Natural killer cell (primary cell): ENCODE measurements at regions of chr19 and their contacts with region 1.

Region 1: GRCh38 chr19:4108767-4109625 is 14.9 kb downstream of the MAP2K2 start:
- DNase-seq: peak; percentile 83 to 91
- ATAC-seq: peak; percentile 52 to 79 (median 69)
- H3K4me3 ChIP-seq: no peak overlapping the region
- H3K4me3 Mint-ChIP-seq: peak overlapping the region; percentile 78
- H3K27ac ChIP-seq: peak overlapping the region; percentile 83
- H3K27ac Mint-ChIP-seq: peak overlapping the region; percentile 97 to 99
- H3K4me1 ChIP-seq: peaks cover 91% of the 10 kb centered on the region
- H3K4me1 Mint-ChIP-seq: peaks cover 63 to 70% of the 10 kb centered on the region in 2 donors
- H3K27me3 ChIP-seq: no peaks in the 10 kb centered on the region
- H3K27me3 Mint-ChIP-seq: no peaks in the 10 kb centered on the region
- CTCF ChIP-seq: no peak

Region 2: DNA sequence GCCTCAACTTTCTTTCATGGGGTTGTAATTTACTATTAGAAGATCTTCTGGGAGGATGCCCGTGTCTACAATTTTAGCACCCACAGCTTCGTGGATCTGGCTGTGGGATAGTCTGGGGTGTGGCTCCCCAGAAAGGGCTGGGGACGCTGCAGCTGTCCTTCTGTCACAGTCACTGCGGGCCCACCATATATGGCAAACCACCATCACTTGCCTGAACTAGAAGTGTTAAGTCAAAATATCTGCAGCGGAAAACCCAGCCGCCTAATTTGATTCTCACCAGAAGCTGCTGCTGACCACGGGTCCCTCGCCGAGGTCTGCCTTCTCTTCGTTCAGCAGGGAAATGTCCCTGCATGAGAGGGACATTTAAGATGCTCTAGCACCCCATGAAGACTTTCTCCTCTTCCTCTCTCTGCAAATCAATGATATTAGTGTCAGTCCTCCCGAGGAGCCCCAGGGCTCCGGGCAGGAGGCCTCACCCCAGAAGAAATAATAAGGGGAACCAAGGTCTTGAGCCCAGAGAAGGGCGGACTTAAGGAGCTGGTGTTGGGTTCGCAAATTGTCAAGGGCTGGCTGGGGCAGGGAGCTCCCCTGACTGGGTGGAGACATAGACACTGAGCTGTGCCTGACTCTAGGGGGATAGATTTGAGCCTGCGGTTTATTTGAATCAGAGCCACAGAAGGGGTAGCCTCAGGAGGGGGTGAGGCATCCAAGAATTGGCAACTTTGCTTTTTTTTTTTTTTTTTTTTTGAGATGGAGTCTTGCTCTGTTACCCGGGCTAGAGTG is 319.8 kb before region 1 on chr19:
- intact Hi-C with region 1: loop called (anchors 2 kb)
- DNase-seq: peak; percentile 70 to 77
- ATAC-seq: peak; percentile 67 to 82 (median 77)
- H3K4me3 ChIP-seq: peak overlapping the region; percentile 15
- H3K4me3 Mint-ChIP-seq: peak overlapping the region; percentile 88
- H3K27ac ChIP-seq: peak overlapping the region; percentile 84
- H3K27ac Mint-ChIP-seq: peak overlapping the region; percentile 92 to 96
- H3K4me1 ChIP-seq: peaks cover 80% of the 10 kb centered on the region
- H3K4me1 Mint-ChIP-seq: peaks cover 41 to 57% of the 10 kb centered on the region in 2 donors
- H3K27me3 ChIP-seq: no peaks in the 10 kb centered on the region
- H3K27me3 Mint-ChIP-seq: no peaks in the 10 kb centered on the region
- CTCF ChIP-seq: no peak

Region 3: DNA sequence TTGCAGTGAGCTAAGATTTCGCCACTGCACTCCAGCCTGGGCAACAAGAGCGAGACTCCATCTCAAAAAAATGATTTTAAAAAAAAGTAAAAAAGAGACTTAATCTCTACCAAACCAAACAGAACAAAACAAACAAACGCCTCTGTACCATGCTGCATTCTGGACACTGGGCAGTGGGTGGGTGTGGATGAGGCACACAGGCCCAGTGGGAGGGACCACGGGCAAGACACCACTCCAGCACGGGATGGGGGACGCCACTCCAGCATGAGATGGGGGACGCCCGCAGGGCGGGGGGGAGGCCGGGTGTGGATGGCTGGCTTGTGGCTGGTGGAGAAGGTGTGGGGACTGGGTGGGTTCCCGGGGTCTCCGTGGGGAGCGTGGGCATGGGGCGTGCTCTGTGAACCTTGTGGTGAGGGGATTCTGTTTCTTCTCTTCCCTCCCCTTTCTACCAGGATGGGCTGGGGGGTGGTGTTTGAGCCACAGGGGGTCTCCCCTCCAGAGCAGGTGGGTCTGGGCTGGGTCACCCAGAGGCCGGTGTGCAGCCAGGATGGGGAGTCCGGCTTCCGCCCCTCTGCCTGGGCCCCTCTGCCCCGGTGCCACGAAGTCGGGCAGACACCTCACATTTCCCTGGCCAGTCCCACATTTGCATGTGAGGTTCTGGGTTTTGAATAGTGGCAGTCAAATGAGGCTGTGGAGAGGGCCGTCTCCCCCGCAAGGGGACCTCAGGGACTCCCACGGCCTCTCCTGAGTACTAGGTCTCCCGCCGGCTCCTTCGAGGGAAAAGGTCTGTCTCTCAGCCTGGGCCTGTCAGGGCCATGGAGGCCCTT is 298.9 kb before region 1 on chr19:
- intact Hi-C with region 1: loop called (anchors 2 kb)
- DNase-seq: no peak
- ATAC-seq: no peak
- H3K4me3 ChIP-seq: no peak overlapping the region
- H3K4me3 Mint-ChIP-seq: no peak overlapping the region
- H3K27ac ChIP-seq: peak overlapping the region; percentile 62
- H3K27ac Mint-ChIP-seq: peak overlapping the region; percentile 65 to 99
- H3K4me1 ChIP-seq: peaks cover 100% of the 10 kb centered on the region
- H3K4me1 Mint-ChIP-seq: peaks cover 52 to 63% of the 10 kb centered on the region in 2 donors
- H3K27me3 ChIP-seq: no peaks in the 10 kb centered on the region
- H3K27me3 Mint-ChIP-seq: no peaks in the 10 kb centered on the region
- CTCF ChIP-seq: no peak

Region 4: GRCh38 chr19:4058034-4058692 is 50.8 kb before region 1 on chr19:
- intact Hi-C with region 1: loop called (anchors 2 kb)
- DNase-seq: peak; percentile 67 to 74
- ATAC-seq: peak; percentile 47 to 73 (median 51)
- H3K4me3 ChIP-seq: peak overlapping the region; percentile 30
- H3K4me3 Mint-ChIP-seq: peak overlapping the region; percentile 55
- H3K27ac ChIP-seq: peak overlapping the region; percentile 97
- H3K27ac Mint-ChIP-seq: peak overlapping the region; percentile 91 to 96
- H3K4me1 ChIP-seq: peaks cover 75% of the 10 kb centered on the region
- H3K4me1 Mint-ChIP-seq: peaks cover 10 to 58% of the 10 kb centered on the region in 2 donors
- H3K27me3 ChIP-seq: no peaks in the 10 kb centered on the region
- H3K27me3 Mint-ChIP-seq: no peaks in the 10 kb centered on the region
- CTCF ChIP-seq: no peak

Region 5: GRCh38 chr19:4065430-4066175 is 43.4 kb before region 1 on chr19:
- intact Hi-C with region 1: loop called (anchors 2 kb)
- DNase-seq: peak; percentile 98
- ATAC-seq: peak; percentile 76 to 92 (median 79)
- H3K4me3 ChIP-seq: peak overlapping the region; percentile 99
- H3K4me3 Mint-ChIP-seq: peak overlapping the region; percentile 74
- H3K27ac ChIP-seq: no peak overlapping the region
- H3K27ac Mint-ChIP-seq: peak overlapping the region in 1 of 2 donors; percentile 86
- H3K4me1 ChIP-seq: peaks cover 67% of the 10 kb centered on the region
- H3K4me1 Mint-ChIP-seq: peaks cover 24 to 35% of the 10 kb centered on the region in 2 donors
- H3K27me3 ChIP-seq: no peaks in the 10 kb centered on the region
- H3K27me3 Mint-ChIP-seq: no peaks in the 10 kb centered on the region
- CTCF ChIP-seq: no peak

Region 6: GRCh38 chr19:4077882-4078614 is 30.9 kb before region 1 on chr19:
- intact Hi-C with region 1: no loop called
- DNase-seq: peak in 1 of 2 donors; percentile 65
- ATAC-seq: peak; percentile 72 to 81 (median 80)
- H3K4me3 ChIP-seq: peak overlapping the region; percentile 55
- H3K4me3 Mint-ChIP-seq: peak overlapping the region; percentile 90
- H3K27ac ChIP-seq: peak overlapping the region; percentile 82
- H3K27ac Mint-ChIP-seq: peak overlapping the region; percentile 79 to 89
- H3K4me1 ChIP-seq: peaks cover 61% of the 10 kb centered on the region
- H3K4me1 Mint-ChIP-seq: peaks cover 0 to 27% of the 10 kb centered on the region in 2 donors
- H3K27me3 ChIP-seq: no peaks in the 10 kb centered on the region
- H3K27me3 Mint-ChIP-seq: no peaks in the 10 kb centered on the region
- CTCF ChIP-seq: no peak

Region 7: GRCh38 chr19:4089400-4089908 is 19.5 kb before region 1 on chr19:
- intact Hi-C with region 1: loop called (anchors 1 kb)
- DNase-seq: peak; percentile 67 to 75
- ATAC-seq: peak; percentile 70 to 82 (median 77)
- H3K4me3 ChIP-seq: peak overlapping the region; percentile 28
- H3K4me3 Mint-ChIP-seq: peak overlapping the region; percentile 88
- H3K27ac ChIP-seq: peak overlapping the region; percentile 90
- H3K27ac Mint-ChIP-seq: peak overlapping the region; percentile 92 to 97
- H3K4me1 ChIP-seq: peaks cover 60% of the 10 kb centered on the region
- H3K4me1 Mint-ChIP-seq: peaks cover 36 to 51% of the 10 kb centered on the region in 2 donors
- H3K27me3 ChIP-seq: no peaks in the 10 kb centered on the region
- H3K27me3 Mint-ChIP-seq: no peaks in the 10 kb centered on the region
- CTCF ChIP-seq: no peak